Activated CD8-positive, alpha-beta T cell treated with anti-CD3 and anti-CD28 coated beads, Interleukin-2, amount 10 ng/mL, durations not matched to agents 7 days and 5 days (primary cell): ENCODE measurements at regions of chr1 and their contacts with region 1.

Region 1: GRCh38 chr1:116661633-116662032 is 5.9 kb downstream of the IGSF3 start:
- DNase-seq: no peak
- ATAC-seq: no peak
- H3K4me3 Mint-ChIP-seq: no peak overlapping the region
- H3K27ac Mint-ChIP-seq: no peak overlapping the region
- H3K4me1 Mint-ChIP-seq: peaks cover 20% of the 10 kb centered on the region
- H3K27me3 Mint-ChIP-seq: peaks cover 45% of the 10 kb centered on the region

Region 2: GRCh38 chr1:116674011-116674531 is 12.4 kb after region 1 on chr1:
- CTCF ChIA-PET with region 1: interaction called, 14 read pairs
- POLR2A ChIA-PET with region 1: no interaction called
- DNase-seq: no peak
- ATAC-seq: no peak
- H3K4me3 Mint-ChIP-seq: no peak overlapping the region
- H3K27ac Mint-ChIP-seq: no peak overlapping the region
- H3K4me1 Mint-ChIP-seq: no peaks in the 10 kb centered on the region
- H3K27me3 Mint-ChIP-seq: peaks cover 61% of the 10 kb centered on the region

Region 3: GRCh38 chr1:116686723-116687368 is 25.2 kb after region 1 on chr1:
- CTCF ChIA-PET with region 1: no interaction called
- POLR2A ChIA-PET with region 1: no interaction called
- DNase-seq: no peak
- ATAC-seq: no peak
- H3K4me3 Mint-ChIP-seq: no peak overlapping the region
- H3K27ac Mint-ChIP-seq: no peak overlapping the region
- H3K4me1 Mint-ChIP-seq: no peaks in the 10 kb centered on the region
- H3K27me3 Mint-ChIP-seq: peaks cover 4% of the 10 kb centered on the region